Activated naive CD4-positive, alpha-beta T cell treated with anti-CD3 and anti-CD28 coated beads for 36 hours (primary cell): ENCODE measurements at regions of chr1 and their contacts with region 1.

Region 1: DNA sequence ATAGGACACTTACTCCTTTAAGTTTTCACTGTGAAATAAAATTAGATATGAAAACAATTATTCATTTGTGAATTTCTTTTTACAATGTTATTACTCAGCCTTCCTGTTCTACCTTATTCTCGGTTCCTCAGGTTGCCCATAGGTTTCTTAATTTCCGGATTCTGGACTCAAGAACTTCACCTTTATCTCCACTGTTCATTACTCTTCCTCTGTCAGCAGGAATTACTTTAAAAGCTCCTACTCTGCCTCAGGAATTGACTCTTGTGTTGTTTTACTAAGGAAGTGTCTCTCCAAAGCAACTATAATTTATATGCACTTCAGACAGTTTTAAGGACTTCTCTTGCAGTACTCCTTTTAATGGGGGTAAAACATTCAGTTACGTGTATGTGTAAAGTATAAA is 123.8 kb downstream of the OSBPL9 start:
- DNase-seq: no peak
- H3K4me3 Mint-ChIP-seq: no peak overlapping the region
- H3K27ac Mint-ChIP-seq: no peak overlapping the region
- H3K4me1 Mint-ChIP-seq: peaks cover 44% of the 10 kb centered on the region
- H3K27me3 Mint-ChIP-seq: no peaks in the 10 kb centered on the region

Region 2: DNA sequence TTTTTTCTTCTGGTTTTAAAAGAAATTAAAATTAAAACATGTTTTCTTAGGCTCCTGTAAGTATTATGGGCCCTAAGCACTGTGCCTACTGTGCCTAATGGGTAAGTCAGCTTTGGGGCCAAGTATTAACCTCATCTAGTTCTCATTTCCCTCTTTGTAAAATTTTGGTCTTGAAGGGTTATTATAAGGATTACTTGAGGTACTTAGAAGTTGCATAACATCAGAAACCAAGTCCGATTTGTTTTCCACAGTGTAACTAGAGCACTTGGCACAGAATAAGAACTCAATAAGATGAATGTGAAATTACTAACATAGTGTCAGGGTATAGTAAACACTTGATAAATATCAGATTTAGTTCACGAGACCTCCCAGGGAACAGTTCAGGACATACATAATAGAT is 140.1 kb before region 1 on chr1:
- CTCF ChIA-PET with region 1: no interaction called
- intact Hi-C with region 1: no loop called
- DNase-seq: no peak
- H3K4me3 Mint-ChIP-seq: no peak overlapping the region
- H3K27ac Mint-ChIP-seq: no peak overlapping the region
- H3K4me1 Mint-ChIP-seq: no peaks in the 10 kb centered on the region
- H3K27me3 Mint-ChIP-seq: no peaks in the 10 kb centered on the region

Region 3: GRCh38 chr1:51756290-51756689 is 15.6 kb after region 1 on chr1:
- CTCF ChIA-PET with region 1: no interaction called
- intact Hi-C with region 1: loop called (anchors 2 kb)
- DNase-seq: no peak
- H3K4me3 Mint-ChIP-seq: no peak overlapping the region
- H3K27ac Mint-ChIP-seq: no peak overlapping the region
- H3K4me1 Mint-ChIP-seq: peaks cover 23% of the 10 kb centered on the region
- H3K27me3 Mint-ChIP-seq: no peaks in the 10 kb centered on the region